GM10248 (cell line): ENCODE measurements at regions of chr6 and their contacts with region 1.

Region 1: DNA sequence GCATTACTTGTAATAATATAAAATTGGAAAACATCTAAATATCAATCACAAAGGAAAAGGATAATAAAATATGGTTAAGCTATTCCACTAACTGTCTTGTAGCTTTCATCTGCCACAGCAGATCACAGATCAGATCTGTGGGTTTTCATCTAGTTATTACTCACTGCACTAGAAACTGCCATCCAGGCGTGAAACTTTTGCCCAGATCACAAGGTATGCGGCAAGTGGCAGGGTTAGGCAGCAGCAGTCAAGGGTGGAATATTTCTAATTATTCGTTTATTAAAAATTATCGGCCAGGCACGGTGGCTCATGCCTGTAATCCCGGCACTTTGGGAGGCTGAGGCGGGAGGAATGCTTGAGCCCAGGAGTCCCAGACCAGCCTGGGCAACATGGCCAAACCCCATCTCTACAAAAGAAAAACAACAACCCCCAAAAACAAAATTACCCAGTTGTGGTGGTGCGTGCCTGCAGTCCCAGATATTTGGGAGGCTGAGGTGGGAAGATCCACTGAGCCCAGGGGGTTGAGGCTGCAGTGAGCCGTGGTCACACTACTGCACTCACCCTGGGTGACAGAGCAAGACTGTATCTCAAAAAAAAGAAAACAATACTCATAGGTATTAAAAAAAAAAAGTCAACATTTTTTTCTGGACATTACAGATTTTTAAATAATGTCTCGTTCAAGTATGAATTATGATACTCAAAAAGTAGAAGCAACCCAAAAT is 32.1 kb downstream of the BEND3 start:
- DNase-seq: no peak
- CTCF ChIP-seq: no peak

Region 2: DNA sequence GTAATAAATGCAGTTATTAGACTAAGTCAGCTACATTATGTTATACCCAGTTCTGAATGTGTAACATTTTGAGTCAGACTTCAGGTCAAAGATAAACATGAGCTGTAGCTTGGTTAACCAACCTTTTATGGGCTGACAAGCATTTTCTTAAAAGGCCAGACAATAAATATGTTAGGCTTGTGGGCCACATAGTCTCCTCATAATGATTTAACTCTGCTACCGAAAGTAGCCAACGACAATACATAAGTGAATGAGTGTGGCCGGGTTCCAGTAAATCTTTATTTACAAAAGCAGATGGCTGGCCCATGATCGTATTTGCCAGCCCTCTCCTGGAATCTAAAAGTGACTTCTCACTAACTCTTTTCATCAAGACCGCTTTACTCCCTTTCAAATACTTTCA is 807.5 kb before region 1 on chr6:
- CTCF ChIA-PET with region 1: no interaction called
- POLR2A ChIA-PET with region 1: no interaction called
- DNase-seq: no peak
- CTCF ChIP-seq: no peak

Region 3: DNA sequence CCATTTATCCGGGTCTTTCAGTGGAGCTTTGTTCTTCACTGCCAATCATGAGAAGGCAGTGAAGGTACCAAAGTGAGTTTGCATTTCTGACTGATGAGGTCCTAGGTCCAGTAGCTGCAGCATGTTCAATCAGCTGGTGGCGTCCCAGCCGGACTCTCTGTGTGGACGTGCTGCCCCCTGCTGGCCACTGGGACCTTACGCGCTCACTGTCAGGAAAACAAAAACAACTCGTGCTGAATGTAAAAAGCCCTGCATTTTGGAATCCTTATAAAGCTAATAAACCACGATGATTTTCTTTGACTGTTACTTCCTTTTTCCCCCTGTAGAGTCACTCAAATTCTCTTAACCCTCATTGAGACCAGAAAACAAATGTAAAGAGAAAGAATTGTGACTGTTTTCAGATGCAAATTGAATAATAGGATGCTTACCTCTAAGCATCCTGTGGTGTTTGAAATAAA is 103.8 kb before region 1 on chr6:
- CTCF ChIA-PET with region 1: no interaction called
- POLR2A ChIA-PET with region 1: no interaction called
- DNase-seq: peak; percentile 80
- CTCF ChIP-seq: peak; percentile 98

Region 4: DNA sequence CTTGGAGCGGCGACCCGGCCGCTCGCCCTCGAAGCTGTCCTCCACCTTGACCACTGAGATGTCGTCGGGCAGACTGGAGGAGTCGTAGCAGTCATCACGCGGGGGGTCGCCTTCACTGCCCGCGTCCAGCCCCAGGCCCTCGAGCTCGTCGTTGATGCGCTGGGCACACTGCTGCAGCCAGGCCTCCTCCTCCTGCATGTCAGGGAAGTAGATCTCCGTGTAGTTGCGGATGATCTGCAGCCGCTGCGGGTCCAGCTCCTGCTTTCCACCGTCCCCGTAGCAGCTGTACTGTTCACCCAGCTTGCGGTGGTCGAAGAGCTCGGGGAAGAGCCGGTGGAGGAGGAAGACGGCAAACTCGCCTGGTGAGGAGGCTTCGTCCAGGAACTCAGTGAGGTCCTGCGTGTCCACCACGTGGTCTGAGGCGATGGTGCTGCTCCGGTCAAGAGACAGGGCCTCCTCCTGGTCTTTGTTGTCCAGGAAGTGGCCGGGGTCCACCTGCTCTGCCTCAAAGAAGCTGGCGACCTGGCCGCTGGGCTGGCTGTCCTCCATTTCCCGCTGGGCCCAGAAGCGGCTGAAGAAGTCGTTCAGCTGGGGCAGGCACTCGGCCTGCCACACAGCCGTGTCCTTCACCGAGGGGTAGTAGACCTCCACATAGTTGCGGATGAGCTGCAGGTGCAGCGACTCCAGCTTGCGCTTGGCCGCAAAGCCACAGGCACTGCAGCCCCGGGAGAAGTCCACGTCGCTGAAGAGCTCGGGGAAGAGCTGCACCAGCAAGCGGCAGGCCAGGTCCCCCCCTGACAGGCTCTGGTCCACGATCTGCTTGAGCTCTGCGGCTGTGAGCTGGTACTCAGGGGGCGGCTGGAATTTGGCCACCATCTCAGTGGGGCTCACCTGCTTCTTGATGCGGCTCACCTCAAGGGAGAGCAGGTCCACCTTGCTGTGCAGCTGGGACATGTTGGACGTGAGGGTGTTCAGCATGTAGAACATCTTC is 13.3 kb before region 1 on chr6:
- CTCF ChIA-PET with region 1: interaction called, 11 read pairs
- POLR2A ChIA-PET with region 1: no interaction called
- DNase-seq: no peak
- CTCF ChIP-seq: no peak